ENCODE measurements at regions of chr5 and their contacts with region 1.

Region 1: GRCh38 chr5:69217548-69218526 is 16.8 kb upstream of the CDK7 start:
- DNase-seq: peak; percentile 95
- ATAC-seq: peak; percentile 90
- H3K4me3 ChIP-seq: peak overlapping the region; percentile 85 to 100 (median 97)
- H3K4me3 Mint-ChIP-seq: peak overlapping the region; percentile 99
- H3K27ac ChIP-seq: peak overlapping the region; percentile 93 to 94
- H3K27ac Mint-ChIP-seq: peak overlapping the region; percentile 98
- H3K4me1 ChIP-seq: peaks cover 8 to 17% of the 10 kb centered on the region in 2 donors
- H3K4me1 Mint-ChIP-seq: peaks cover 20% of the 10 kb centered on the region
- H3K27me3 ChIP-seq: no peaks in the 10 kb centered on the region
- H3K27me3 Mint-ChIP-seq: no peaks in the 10 kb centered on the region
- CTCF ChIP-seq: no peak

Region 2: GRCh38 chr5:69105996-69106906 is 111.6 kb before region 1 on chr5:
- CTCF ChIA-PET with region 1: no interaction called
- POLR2A ChIA-PET with region 1: interaction called, 5 read pairs
- intact Hi-C with region 1: loop called (anchors 5 kb)
- DNase-seq: peak; percentile 53
- ATAC-seq: peak; percentile 95
- H3K4me3 ChIP-seq: no peak overlapping the region
- H3K4me3 Mint-ChIP-seq: no peak overlapping the region
- H3K27ac ChIP-seq: peak overlapping the region; percentile 15 to 63
- H3K27ac Mint-ChIP-seq: peak overlapping the region; percentile 84
- H3K4me1 ChIP-seq: peaks cover 8 to 16% of the 10 kb centered on the region in 2 donors
- H3K4me1 Mint-ChIP-seq: peaks cover 18% of the 10 kb centered on the region
- H3K27me3 ChIP-seq: no peaks in the 10 kb centered on the region
- H3K27me3 Mint-ChIP-seq: no peaks in the 10 kb centered on the region
- CTCF ChIP-seq: no peak

Region 3: DNA sequence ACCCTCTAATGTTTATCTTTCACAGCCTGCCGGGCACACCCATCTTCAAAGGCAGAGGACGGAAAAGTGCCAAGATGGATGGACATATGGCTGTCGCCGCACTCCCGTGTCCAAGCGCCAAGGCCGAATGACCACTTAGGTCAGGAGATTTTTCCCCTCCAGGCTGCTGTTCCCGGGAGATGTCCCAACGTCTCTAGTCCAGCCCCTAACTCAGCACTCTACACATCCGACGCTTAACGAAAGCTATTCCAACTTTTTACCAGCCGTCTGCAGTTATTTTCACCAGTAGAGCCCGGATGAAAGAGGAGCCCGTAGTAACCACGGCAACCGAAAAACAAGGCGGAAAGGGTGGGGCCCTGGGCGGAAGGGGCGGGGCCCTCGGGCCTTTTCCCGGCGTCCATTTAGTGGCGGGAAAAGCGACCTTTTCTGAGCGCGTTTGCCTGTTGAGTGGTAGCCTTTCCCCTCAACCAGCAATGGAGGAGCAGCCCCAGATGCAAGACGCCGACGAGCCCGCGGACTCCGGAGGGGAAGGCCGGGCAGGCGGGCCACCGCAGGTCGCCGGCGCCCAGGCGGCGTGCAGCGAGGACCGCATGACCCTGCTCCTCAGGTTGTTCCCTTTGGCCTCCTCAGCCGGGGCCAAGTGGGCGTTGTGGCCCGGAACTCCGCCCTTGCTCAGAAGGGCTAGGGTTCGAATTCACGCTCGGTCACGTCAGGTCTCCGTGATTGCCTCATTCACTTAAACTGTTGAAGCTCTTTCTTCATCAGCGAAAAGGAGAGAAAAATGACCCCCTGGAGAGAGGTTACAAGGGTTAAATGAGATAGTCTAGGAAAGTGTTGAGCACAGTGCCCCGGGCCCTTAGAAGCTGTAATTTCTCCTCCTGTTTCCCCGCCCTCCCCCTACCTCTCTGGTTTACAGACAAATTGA is 28.4 kb before region 1 on chr5 and contains the start of gene CENPH:
- CTCF ChIA-PET with region 1: interaction called, 3 read pairs
- POLR2A ChIA-PET with region 1: interaction called, 4 read pairs
- intact Hi-C with region 1: loop called (anchors 1 kb)
- DNase-seq: peak; percentile 91
- ATAC-seq: peak; percentile 92
- H3K4me3 ChIP-seq: peak within 1 kb of the TSS; percentile 64 to 96 (median 80)
- H3K4me3 Mint-ChIP-seq: peak within 1 kb of the TSS; percentile 95
- H3K27ac ChIP-seq: peak within 1 kb of the TSS; percentile 30 to 88
- H3K27ac Mint-ChIP-seq: peak within 1 kb of the TSS; percentile 93
- H3K4me1 ChIP-seq: peaks cover 9 to 14% of the 10 kb centered on the region in 2 donors
- H3K4me1 Mint-ChIP-seq: peaks cover 17% of the 10 kb centered on the region
- H3K27me3 ChIP-seq: no peaks in the 10 kb centered on the region
- H3K27me3 Mint-ChIP-seq: no peaks in the 10 kb centered on the region
- CTCF ChIP-seq: no peak
- total RNA-seq, gene CENPH: 11.9 and 12.0 TPM in 2 replicates

Region 4: DNA sequence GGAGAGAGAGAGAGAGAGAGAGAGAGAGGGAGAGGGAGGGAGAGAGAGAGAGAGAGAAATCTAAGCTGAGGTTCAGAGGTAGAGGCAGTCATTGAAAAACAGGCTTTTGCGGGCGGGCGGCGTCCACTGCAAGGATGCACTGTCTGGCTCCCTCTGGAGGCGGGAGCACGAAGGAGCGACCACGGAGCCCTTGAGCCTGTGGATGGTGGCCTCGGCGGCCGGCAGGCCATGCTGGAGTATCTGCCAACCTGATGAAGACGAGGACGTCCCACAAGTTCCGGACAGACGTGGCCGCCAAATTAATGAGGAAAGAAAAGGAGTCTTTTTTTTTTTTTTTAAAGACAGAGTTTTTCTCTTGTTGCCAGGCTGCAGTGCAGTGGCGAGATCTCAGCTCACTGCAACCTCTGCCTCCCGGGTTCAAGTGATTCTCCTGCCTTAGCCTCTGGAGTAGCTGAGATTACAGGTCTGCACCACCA is 117.0 kb after region 1 on chr5:
- CTCF ChIA-PET with region 1: no interaction called
- POLR2A ChIA-PET with region 1: no interaction called
- intact Hi-C with region 1: loop called (anchors 1 kb)
- DNase-seq: peak; percentile 78
- ATAC-seq: peak; percentile 67
- H3K4me3 ChIP-seq: no peak overlapping the region
- H3K4me3 Mint-ChIP-seq: peak overlapping the region; percentile 30
- H3K27ac ChIP-seq: no peak overlapping the region
- H3K27ac Mint-ChIP-seq: peak overlapping the region; percentile 56
- H3K4me1 ChIP-seq: peaks cover 10 to 17% of the 10 kb centered on the region in 2 donors
- H3K4me1 Mint-ChIP-seq: peaks cover 15% of the 10 kb centered on the region
- H3K27me3 ChIP-seq: no peaks in the 10 kb centered on the region
- H3K27me3 Mint-ChIP-seq: no peaks in the 10 kb centered on the region
- CTCF ChIP-seq: peak; percentile 62

Region 5: DNA sequence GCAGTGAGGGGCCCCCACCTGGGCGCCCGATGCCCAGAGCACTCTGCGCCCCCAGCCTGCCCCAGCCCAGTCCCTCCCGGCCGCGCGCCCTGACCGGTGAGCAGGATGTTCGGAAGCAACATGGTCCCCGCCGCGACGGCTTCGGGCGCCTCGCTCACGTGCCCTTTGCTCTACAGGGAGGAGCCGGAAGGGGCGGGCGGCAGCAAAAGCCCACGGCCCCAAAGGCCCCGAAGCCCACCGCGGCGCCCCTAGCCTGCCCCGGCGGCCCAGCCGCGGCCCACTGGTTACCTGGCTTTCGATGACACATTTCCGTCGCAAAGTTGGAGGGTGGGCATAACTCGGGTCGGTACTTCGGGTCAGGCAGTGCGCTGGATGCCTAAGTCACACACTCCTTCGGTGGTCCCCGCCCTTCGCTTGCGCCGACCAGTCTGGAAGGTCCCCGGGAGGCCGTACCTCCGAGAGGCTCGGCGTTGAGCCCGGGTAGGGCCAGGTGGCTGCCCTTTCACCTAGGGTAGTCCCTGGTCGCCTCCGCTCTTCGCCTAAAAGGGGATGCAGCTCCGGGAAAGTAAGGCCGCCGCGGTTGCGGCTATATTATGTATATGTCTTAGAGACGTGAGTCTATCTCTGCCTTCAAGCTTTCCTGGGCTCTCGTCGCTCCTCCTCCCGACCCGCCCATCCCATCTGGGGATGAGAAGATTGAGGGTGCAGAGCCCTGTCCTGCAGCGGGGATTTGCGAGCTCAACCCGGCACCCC is 151.7 kb after region 1 on chr5 and contains the starts of genes AK6, RAD17 and TAF9:
- CTCF ChIA-PET with region 1: no interaction called
- POLR2A ChIA-PET with region 1: interaction called, 3 read pairs
- intact Hi-C with region 1: loop called (anchors 1 kb)
- DNase-seq: peak; percentile 99
- ATAC-seq: peak; percentile 95
- H3K4me3 ChIP-seq: peak within 1 kb of the TSS; percentile 69 to 89 (median 83)
- H3K4me3 Mint-ChIP-seq: peak within 1 kb of the TSS; percentile 96
- H3K27ac ChIP-seq: peak within 1 kb of the TSS; percentile 96 to 99
- H3K27ac Mint-ChIP-seq: peak within 1 kb of the TSS; percentile 100
- H3K4me1 ChIP-seq: peaks cover 22 to 26% of the 10 kb centered on the region in 2 donors
- H3K4me1 Mint-ChIP-seq: peaks cover 41% of the 10 kb centered on the region
- H3K27me3 ChIP-seq: no peaks in the 10 kb centered on the region
- H3K27me3 Mint-ChIP-seq: no peaks in the 10 kb centered on the region
- CTCF ChIP-seq: no peak
- total RNA-seq, gene AK6: 21.7 and 25.4 TPM in 2 replicates
- total RNA-seq, gene RAD17: 39.6 and 41.0 TPM in 2 replicates
- total RNA-seq, gene TAF9: 41.6 and 42.0 TPM in 2 replicates

Measured in B cell (primary cell).